PC-3 (cell line): ENCODE measurements at regions of chr5 and their contacts with region 1.

Region 1: GRCh38 chr5:165630261-165630778 is 2124.9 kb downstream of the MAT2B start:
- DNase-seq: peak; percentile 59
- ATAC-seq: peak; percentile 79
- H3K4me3 ChIP-seq: no peak overlapping the region
- H3K27ac ChIP-seq: no peak overlapping the region
- H3K4me1 ChIP-seq: no peaks in the 10 kb centered on the region
- H3K27me3 ChIP-seq: no peaks in the 10 kb centered on the region
- CTCF ChIP-seq: peak; percentile 64; the same call in 1 of the 2 replicates

Region 2: GRCh38 chr5:165781738-165782137 is 151.4 kb after region 1 on chr5:
- CTCF ChIA-PET with region 1: no interaction called
- POLR2A ChIA-PET with region 1: no interaction called
- intact Hi-C with region 1: loop called (anchors 10 kb)
- DNase-seq: no peak
- ATAC-seq: no peak
- H3K4me3 ChIP-seq: no peak overlapping the region
- H3K27ac ChIP-seq: no peak overlapping the region
- H3K4me1 ChIP-seq: no peaks in the 10 kb centered on the region; the same call in 1 of the 2 replicates
- H3K27me3 ChIP-seq: no peaks in the 10 kb centered on the region
- CTCF ChIP-seq: no peak

Region 3: DNA sequence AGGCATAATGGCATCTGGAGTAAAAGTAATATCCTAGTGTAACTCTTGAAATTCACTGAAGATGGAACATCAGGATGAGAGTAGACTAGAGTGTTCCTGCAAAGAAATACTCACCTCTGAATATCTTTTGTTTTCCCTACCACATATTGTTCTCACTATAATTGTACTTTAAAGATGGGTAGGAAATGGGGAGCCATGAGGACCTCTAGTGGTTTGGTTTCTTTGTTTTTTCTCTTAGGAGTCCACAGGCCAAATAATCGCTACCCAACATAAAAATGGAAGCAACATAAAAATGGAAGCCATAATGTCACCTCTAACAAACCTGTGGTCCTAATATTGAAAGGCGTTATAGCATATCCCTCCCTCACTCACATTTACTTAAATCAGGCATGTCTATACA is 250.9 kb after region 1 on chr5:
- CTCF ChIA-PET with region 1: no interaction called
- POLR2A ChIA-PET with region 1: no interaction called
- intact Hi-C with region 1: loop called (anchors 2 kb)
- DNase-seq: peak; percentile 2
- ATAC-seq: no peak
- H3K4me3 ChIP-seq: no peak overlapping the region
- H3K27ac ChIP-seq: no peak overlapping the region
- H3K4me1 ChIP-seq: no peaks in the 10 kb centered on the region
- H3K27me3 ChIP-seq: no peaks in the 10 kb centered on the region
- CTCF ChIP-seq: no peak; the same call in 1 of the 2 replicates